ENCODE measurements at regions of chr5 and their contacts with region 1.

Region 1: GRCh38 chr5:159987031-159987674 is 21.8 kb upstream of the TTC1 start:
- DNase-seq: peak; percentile 91
- H3K4me3 Mint-ChIP-seq: peak overlapping the region; percentile 63
- H3K27ac Mint-ChIP-seq: no peak overlapping the region
- H3K4me1 Mint-ChIP-seq: no peaks in the 10 kb centered on the region
- H3K27me3 Mint-ChIP-seq: peaks cover 61% of the 10 kb centered on the region

Region 2: GRCh38 chr5:159156426-159157238 is 830.5 kb before region 1 on chr5:
- intact Hi-C with region 1: loop called (anchors 5 kb)
- DNase-seq: peak; percentile 82
- H3K4me3 Mint-ChIP-seq: no peak overlapping the region
- H3K27ac Mint-ChIP-seq: no peak overlapping the region
- H3K4me1 Mint-ChIP-seq: peaks cover 29% of the 10 kb centered on the region
- H3K27me3 Mint-ChIP-seq: no peaks in the 10 kb centered on the region

Region 3: DNA sequence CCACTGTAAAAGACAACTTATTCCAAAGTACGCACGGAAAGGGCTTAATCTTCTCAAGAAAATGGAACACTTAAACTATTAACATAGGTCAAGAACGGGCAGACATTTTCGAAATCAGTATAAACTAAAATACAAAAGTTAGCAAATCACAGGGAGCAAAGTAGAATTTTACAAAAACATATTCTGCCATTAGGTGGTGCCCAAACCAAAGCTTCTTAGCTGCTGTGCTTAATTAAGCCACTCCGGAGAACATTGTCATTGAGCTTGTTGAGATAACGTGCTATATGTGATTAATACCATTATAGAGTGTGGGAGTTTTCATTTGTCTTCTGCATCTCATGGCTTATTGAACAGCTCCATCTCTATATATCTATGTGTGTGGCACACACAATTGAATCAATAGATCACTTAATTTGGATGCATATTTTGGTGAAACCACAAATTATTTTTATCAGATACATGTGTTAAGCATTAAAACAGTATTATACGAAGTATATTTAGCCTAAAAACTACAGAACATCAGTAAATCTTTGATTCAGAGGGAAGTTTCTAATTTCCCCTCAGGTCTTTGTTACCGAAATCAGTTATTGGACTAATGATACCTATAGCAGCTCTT is 700.6 kb before region 1 on chr5:
- intact Hi-C with region 1: loop called (anchors 2 kb)
- DNase-seq: peak; percentile 70
- H3K4me3 Mint-ChIP-seq: no peak overlapping the region
- H3K27ac Mint-ChIP-seq: no peak overlapping the region
- H3K4me1 Mint-ChIP-seq: no peaks in the 10 kb centered on the region
- H3K27me3 Mint-ChIP-seq: peaks cover under 1% of the 10 kb centered on the region

Region 4: DNA sequence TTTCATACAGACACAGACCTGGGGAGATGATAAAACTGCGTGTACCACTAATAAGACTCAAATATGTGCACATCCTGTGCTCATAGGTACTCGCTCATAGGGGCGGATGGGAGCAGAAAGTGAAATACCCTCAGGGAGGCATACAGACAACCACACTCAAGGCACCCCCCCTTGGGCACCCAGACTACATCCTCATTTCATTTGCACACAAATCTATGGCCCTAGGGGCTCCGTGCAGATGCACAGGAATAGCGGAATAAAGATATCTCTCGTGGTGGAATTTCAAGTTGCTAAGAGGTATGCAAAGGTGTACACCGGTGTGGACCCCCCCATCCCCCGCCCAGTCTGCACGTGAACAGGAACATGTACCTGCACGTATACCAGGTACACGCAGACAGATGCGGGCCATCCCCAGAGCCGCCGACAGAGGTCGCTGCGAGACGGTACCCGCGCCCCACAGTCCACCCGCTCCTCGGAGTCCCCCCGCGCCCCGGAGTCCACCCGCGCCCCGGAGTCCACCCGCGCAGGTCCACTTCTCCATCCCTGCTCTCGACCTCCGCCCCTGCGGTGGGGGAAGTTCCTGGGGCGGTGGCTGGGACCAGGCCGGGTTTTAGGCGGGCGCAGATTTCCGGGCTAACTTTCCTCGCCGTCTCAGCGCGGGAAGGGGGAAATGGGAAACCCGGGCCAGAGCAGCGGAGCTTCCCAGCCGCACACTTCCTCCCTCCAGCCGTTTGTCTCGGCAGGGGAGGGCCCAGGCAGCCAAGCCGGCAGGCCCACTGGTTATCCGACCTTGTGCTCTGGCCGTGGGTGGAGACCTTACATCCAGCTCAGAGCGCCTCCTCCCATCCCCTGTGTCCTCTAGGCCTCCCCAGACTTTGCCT is 655.8 kb before region 1 on chr5:
- intact Hi-C with region 1: loop called (anchors 5 kb)
- DNase-seq: peak; percentile 93
- H3K4me3 Mint-ChIP-seq: peak overlapping the region; percentile 75
- H3K27ac Mint-ChIP-seq: peak overlapping the region; percentile 41
- H3K4me1 Mint-ChIP-seq: peaks cover 32% of the 10 kb centered on the region
- H3K27me3 Mint-ChIP-seq: peaks cover 26% of the 10 kb centered on the region

Region 5: DNA sequence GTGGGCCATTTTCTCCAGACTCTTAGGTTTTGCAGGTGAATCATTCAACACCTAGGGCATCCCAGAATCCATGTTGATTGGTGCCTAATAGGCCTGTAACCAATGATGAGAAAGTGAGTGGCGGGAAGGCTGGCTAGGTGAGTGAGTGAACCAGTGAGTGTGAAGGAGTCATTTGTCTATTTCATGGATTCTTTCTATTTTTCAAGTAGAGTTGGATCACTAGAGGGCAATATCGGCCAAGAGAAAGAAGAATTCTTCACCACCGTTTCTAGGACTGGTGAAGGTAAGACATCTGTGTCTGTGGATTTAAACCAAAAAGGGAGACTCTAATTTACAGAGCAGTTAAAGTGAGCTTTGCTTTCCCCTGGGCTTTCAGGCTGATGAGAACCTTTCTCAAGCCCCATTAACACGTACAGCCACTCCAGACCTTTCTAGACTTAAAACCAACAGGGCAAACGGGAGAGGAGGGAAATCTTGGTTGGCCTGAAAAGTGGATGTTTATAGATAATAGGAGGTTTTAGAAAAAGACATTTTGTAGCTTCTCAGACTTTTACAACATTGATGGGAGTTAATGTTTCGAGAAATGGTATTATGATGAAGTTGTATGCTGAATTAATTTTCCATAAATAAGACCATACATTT is 542.6 kb before region 1 on chr5:
- intact Hi-C with region 1: loop called (anchors 1 kb)
- DNase-seq: peak; percentile 61
- H3K4me3 Mint-ChIP-seq: no peak overlapping the region
- H3K27ac Mint-ChIP-seq: no peak overlapping the region
- H3K4me1 Mint-ChIP-seq: peaks cover 5% of the 10 kb centered on the region
- H3K27me3 Mint-ChIP-seq: peaks cover 62% of the 10 kb centered on the region

Region 6: DNA sequence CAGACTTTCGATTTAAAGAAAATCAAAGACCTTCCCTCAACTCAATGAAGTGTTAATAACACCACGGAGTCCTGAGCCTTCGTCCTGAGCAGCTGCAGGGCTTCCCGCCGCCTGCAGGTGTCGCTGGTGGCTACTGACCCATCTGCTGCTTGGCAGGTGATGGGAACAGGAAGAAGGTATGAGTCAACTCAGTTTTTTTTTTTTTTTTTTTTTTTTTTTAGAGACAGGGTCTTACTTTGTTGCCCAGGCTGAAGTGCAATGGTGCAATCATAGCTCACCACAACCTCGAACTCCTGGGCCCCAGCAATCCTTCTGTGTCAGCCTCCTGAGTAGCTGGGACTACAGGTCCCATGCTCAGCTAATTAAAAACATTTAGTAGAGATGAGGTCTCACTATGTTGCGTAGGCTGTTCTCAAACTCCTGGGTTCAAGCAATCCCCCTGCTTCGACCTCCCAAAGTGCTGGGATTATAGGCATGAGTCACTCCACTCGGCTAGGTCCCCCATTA is 471.2 kb before region 1 on chr5:
- intact Hi-C with region 1: loop called (anchors 1 kb)
- DNase-seq: peak; percentile 90
- H3K4me3 Mint-ChIP-seq: no peak overlapping the region
- H3K27ac Mint-ChIP-seq: no peak overlapping the region
- H3K4me1 Mint-ChIP-seq: peaks cover 4% of the 10 kb centered on the region
- H3K27me3 Mint-ChIP-seq: peaks cover 27% of the 10 kb centered on the region

Measured in activated CD4-positive, alpha-beta T cell treated with anti-CD3 and anti-CD28 coated beads, Interleukin-2, amount 10 ng/mL, durations not matched to agents 24 days and 14 days (primary cell).